ENCODE measurements at regions of chr12 and their contacts with region 1.

Region 1: GRCh38 chr12:132445884-132446632 is 43.9 kb upstream of the FBRSL1 start:
- DNase-seq: peak; percentile 41 to 89 (median 62)
- ATAC-seq: peak; percentile 29 to 53
- H3K4me3 Mint-ChIP-seq: peak overlapping the region; percentile 72 to 97 (median 88)
- H3K27ac Mint-ChIP-seq: peak overlapping the region; percentile 99 to 100 (median 100)
- H3K4me1 Mint-ChIP-seq: peaks cover 32 to 76% (median 61%) of the 10 kb centered on the region in 4 donors
- H3K27me3 Mint-ChIP-seq: no peaks in the 10 kb centered on the region

Region 2: DNA sequence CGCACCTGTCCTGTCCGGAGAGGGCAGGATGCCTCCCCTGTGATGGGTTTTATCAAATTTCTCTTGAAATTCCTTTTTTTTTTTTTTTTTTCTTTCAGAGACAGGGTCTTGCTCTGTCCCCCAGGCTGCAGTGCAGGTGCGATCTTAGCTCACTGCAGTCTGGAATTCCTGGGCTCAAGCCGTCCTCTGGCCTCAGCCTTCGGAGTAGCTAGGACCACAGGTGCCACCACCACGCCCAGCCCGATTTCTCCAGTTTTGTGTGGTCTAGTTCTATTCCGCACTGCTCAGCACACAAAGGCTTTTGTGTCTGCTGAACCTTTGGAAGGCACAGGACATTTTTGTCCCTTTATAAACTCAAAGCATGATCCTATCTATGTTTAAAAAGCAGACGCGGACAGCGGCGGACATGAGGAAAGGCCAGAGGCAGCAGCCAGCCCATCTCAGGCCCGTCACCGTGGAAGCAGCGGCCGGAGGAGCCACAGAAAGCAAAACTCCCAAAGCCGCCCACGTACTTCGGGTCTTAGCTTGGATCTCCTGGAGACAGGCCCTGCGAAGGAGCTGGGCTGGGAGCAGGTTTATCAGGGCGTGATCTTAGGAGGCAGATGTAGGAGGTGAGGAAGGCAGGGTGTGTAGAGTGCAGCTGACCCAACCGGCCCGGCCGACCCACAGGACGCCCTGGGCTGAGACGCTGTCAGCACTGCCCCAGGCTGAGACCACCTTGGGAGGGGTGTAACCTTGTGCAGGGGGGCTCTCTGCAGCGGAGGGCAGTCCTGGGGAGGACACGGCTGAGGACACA is 13.0 kb after region 1 on chr12:
- POLR2A ChIA-PET with region 1: interaction called, 16 read pairs
- DNase-seq: no peak
- ATAC-seq: no peak
- H3K4me3 Mint-ChIP-seq: no peak overlapping the region
- H3K27ac Mint-ChIP-seq: no peak overlapping the region
- H3K4me1 Mint-ChIP-seq: peaks cover 7 to 29% (median 24%) of the 10 kb centered on the region in 4 donors
- H3K27me3 Mint-ChIP-seq: no peaks in the 10 kb centered on the region

Region 3: DNA sequence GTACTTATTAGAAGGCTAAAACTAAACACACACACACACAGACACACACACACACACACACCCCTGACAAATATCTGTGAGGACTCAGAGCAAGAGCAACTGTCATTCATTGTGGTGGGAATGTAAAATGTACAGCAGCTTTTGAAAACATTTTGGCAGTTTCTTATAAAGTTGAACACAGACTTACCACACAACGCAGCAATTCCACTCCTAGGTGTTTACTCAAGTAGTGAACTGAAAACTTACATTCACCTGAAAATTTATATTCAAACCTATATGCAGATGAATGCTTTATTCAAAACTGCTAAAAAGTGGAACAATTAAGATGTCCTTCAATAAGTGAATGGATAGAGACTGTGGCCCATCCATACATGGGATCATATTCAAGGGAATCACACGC is 491.4 kb after region 1 on chr12:
- POLR2A ChIA-PET with region 1: no interaction called
- DNase-seq: no peak
- ATAC-seq: no peak
- H3K4me3 Mint-ChIP-seq: no peak overlapping the region
- H3K27ac Mint-ChIP-seq: no peak overlapping the region
- H3K4me1 Mint-ChIP-seq: no peaks in the 10 kb centered on the region
- H3K27me3 Mint-ChIP-seq: no peaks in the 10 kb centered on the region

Measured in naive thymus-derived CD8-positive, alpha-beta T cell (primary cell).